ENCODE measurements at regions of chr17 and their contacts with region 1.

Region 1: DNA sequence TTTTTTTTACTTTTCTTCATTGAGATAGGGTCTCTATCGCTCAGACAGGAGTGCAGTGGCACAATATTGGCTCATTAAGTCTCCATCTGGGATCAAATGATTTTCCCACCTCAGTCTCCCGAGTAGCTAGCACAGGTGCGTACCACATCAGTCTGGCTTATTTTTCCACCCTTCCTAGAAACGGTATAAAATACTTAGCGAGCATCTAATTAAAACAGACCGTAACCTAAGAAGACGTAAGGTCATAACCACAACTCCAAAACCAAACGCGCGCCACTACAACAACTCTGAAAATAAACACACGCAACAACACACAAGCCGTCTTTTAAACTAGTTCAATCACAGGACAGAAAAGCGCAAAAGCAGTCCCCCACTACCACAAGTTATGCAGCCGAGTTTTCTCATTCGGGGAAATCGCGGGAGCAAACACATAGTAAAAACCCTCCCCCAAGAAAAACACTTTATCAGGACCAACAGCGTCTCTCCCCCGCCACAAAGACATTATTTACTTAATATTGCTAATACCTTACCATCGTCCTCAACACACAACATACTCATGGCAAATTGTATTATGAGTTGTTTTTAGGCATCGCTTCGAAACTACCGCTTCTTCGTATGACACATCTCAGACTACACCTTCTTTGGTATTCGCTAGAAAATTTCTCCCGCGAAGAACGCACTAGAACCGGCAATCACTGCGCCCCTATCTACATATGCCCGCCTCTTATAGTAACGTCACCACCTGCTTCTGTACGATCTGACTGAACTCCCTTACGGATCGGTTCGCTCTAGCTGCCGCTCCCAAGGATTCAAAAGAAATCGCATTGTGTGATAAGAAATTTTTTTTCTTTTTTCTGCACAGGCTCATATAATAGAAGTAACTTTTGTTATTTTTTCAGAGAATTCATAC is 32.8 kb downstream of the TEX14 start:
- DNase-seq: peak; percentile 86
- H3K4me3 Mint-ChIP-seq: peak overlapping the region; percentile 77
- H3K27ac Mint-ChIP-seq: peak overlapping the region; percentile 97
- H3K4me1 Mint-ChIP-seq: peaks cover 18% of the 10 kb centered on the region
- H3K27me3 Mint-ChIP-seq: peaks cover 5% of the 10 kb centered on the region

Region 2: DNA sequence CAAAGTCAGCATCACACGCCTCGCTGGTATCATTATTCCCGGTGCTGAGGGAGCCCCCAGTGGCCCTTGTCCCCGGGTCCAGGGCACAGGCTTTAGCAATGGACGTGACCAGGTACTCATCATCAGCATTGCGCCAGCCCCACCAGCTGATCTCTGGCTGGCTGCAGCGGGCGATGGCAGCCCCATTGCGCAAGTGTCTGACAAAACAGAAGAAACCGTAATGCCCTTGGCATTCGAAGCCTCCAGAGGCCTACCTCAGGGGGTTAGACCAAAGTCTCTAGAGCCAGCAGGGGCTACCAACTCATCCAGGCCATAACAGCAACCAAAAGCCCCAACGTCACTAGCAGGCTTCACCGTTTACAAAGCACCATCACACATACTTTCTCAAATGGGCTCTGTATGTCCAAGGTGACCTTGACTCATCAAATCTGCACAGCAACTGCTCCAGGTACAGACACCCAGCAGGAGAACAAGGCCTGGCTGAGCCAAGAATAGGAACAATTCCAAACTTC is 151.9 kb before region 1 on chr17:
- CTCF ChIA-PET with region 1: no interaction called
- POLR2A ChIA-PET with region 1: no interaction called
- intact Hi-C with region 1: no loop called
- DNase-seq: no peak
- H3K4me3 Mint-ChIP-seq: no peak overlapping the region
- H3K27ac Mint-ChIP-seq: no peak overlapping the region
- H3K4me1 Mint-ChIP-seq: peaks cover 10% of the 10 kb centered on the region
- H3K27me3 Mint-ChIP-seq: no peaks in the 10 kb centered on the region

Region 3: DNA sequence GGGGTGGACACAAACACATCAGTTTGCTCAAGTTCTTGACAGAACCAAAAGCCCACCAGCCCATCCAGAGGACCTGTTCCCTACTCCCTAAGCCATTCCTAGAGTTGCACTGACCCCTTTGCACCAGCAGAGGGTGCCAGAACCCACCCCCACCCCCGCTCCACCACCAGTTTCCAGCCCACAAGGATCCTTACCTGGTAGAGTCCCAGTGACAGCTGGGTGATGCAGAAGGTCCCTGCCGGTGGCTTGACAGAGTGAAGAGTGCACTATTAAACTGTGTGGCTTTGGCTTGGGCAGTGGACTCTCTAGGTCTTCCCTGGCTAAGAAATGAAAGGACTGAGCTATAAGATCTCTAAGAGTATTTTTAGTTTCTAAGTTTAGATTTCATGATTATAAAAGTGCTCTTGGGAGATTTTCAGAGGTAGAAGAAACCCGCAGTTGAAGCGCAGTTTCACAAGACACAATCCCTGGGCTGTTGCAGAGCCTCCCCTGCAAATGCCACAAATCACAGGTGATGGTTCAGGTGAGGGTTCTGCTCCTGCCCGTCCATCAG is 71.3 kb before region 1 on chr17:
- CTCF ChIA-PET with region 1: interaction called, 4 read pairs
- POLR2A ChIA-PET with region 1: no interaction called
- intact Hi-C with region 1: loop called (anchors 2 kb)
- DNase-seq: peak; percentile 79
- H3K4me3 Mint-ChIP-seq: no peak overlapping the region
- H3K27ac Mint-ChIP-seq: no peak overlapping the region
- H3K4me1 Mint-ChIP-seq: no peaks in the 10 kb centered on the region
- H3K27me3 Mint-ChIP-seq: no peaks in the 10 kb centered on the region

Region 4: GRCh38 chr17:58692239-58693055 is 33.4 kb after region 1 on chr17 and contains the start of gene RAD51C:
- CTCF ChIA-PET with region 1: no interaction called
- POLR2A ChIA-PET with region 1: interaction called, 22 read pairs
- intact Hi-C with region 1: loop called (anchors 1 kb)
- DNase-seq: peak; percentile 93
- H3K4me3 Mint-ChIP-seq: peak within 1 kb of the TSS; percentile 99
- H3K27ac Mint-ChIP-seq: peak within 1 kb of the TSS; percentile 96
- H3K4me1 Mint-ChIP-seq: peaks cover 25% of the 10 kb centered on the region
- H3K27me3 Mint-ChIP-seq: no peaks in the 10 kb centered on the region
- total RNA-seq, gene RAD51C: 64.0 to 66.0 TPM

Region 5: GRCh38 chr17:58703137-58703972 is 44.3 kb after region 1 on chr17:
- CTCF ChIA-PET with region 1: no interaction called
- POLR2A ChIA-PET with region 1: interaction called, 3 read pairs
- intact Hi-C with region 1: loop called (anchors 1 kb)
- DNase-seq: peak; percentile 36
- H3K4me3 Mint-ChIP-seq: no peak overlapping the region
- H3K27ac Mint-ChIP-seq: peak overlapping the region; percentile 78
- H3K4me1 Mint-ChIP-seq: peaks cover 30% of the 10 kb centered on the region
- H3K27me3 Mint-ChIP-seq: no peaks in the 10 kb centered on the region

Region 6: GRCh38 chr17:58728786-58729185 is 69.7 kb after region 1 on chr17:
- CTCF ChIA-PET with region 1: no interaction called
- POLR2A ChIA-PET with region 1: no interaction called
- intact Hi-C with region 1: no loop called
- DNase-seq: no peak
- H3K4me3 Mint-ChIP-seq: no peak overlapping the region
- H3K27ac Mint-ChIP-seq: no peak overlapping the region
- H3K4me1 Mint-ChIP-seq: no peaks in the 10 kb centered on the region
- H3K27me3 Mint-ChIP-seq: no peaks in the 10 kb centered on the region

Region 7: GRCh38 chr17:58741121-58741625 is 82.1 kb after region 1 on chr17:
- CTCF ChIA-PET with region 1: no interaction called
- POLR2A ChIA-PET with region 1: no interaction called
- intact Hi-C with region 1: no loop called
- DNase-seq: no peak
- H3K4me3 Mint-ChIP-seq: no peak overlapping the region
- H3K27ac Mint-ChIP-seq: no peak overlapping the region
- H3K4me1 Mint-ChIP-seq: no peaks in the 10 kb centered on the region
- H3K27me3 Mint-ChIP-seq: no peaks in the 10 kb centered on the region

Region 8: DNA sequence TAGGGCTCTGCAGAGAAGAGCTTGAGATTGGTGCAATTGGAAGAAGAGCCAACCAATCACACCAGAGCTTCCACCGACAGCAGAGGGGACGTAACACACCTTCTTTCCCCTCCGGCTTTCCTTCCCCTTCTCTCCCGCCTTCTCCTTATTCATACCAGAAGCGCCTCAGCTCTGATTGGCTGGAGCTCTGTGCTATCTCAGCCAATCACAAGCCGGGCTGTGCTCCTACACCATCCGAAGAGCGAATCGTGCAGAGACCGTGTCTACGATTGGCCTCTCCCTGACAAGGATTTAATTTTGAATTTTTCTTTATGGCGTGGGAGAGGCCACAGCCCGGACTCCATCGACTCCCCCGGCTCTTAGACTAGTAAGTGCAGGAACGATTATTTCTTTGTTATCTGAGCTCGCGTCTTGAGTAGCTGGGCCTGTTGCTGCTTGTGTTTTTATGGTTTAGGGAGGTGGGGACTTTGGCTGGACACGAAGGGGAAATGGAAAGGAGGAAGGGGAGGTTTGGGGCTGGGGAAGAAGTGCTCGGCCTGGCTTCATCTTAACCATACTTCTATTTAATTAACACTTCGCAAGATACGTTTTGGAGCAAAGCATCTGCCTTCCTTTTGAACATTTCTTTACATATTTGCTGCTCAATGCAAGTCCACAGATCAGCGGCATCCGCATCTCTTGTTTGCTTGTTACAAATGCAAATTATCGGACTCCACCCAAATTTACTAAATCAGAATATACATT is 496.6 kb after region 1 on chr17 and contains the start of gene PRR11:
- CTCF ChIA-PET with region 1: no interaction called
- POLR2A ChIA-PET with region 1: no interaction called
- intact Hi-C with region 1: loop called (anchors 1 kb)
- DNase-seq: peak; percentile 97
- H3K4me3 Mint-ChIP-seq: no peak within 1 kb of the TSS
- H3K27ac Mint-ChIP-seq: no peak within 1 kb of the TSS
- H3K4me1 Mint-ChIP-seq: peaks cover 37% of the 10 kb centered on the region
- H3K27me3 Mint-ChIP-seq: no peaks in the 10 kb centered on the region
- total RNA-seq, gene PRR11: 67.3 to 70.2 TPM

Measured in activated CD4-positive, alpha-beta memory T cell treated with anti-CD3 and anti-CD28 coated beads for 36 hours (primary cell).